Heart left ventricle (tissue), 16 donors: ENCODE measurements at regions of chr14 and their contacts with region 1.

Region 1: DNA sequence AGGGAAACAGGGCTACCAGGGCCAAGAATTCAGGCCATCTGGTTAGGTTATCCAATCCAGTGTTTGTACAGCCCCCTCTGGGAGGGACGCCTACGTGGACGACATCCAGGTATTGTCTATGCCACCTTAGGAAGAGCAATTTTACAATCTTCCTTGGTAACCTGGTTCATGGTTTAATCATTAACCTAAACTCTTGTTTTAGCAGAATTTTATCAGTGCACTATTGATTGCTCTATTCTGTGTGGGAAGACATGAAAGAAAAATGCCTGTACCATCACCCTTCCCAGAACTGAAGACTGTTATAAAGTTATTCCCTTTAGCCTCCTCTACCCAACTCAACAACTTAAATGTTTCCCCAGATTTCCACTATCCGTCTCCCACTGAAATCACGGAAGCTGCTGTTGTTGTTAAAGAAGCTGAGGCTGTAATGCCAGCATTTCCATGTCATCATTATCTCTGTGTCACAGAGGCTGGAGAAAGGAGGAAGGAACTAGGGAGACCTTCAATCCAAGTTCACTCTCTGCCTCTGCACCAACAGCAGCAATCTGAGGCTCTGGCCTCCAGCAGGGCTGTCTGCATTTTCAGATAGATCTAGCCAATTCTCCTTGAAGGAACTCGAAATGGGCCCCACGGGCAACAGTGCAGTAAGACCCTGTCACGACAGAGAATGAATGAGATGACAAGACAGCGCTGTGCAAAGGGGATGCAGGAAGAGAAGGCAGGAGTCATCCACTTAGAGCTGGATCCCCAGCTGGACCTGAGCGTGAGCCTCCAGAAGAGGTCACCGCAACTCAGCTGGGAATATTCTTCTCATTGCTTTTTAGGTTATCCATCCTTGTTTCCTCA is 183.4 kb upstream of the GZMB start:
- DNase-seq: peak in 4 of 5 donors; percentile 38 to 58 (median 42)
- ATAC-seq: peak; percentile 52 to 74 (median 63)
- H3K4me3 ChIP-seq: no peak overlapping the region
- H3K27ac ChIP-seq: peak overlapping the region; percentile 9 to 78 (median 66)
- H3K4me1 ChIP-seq: peaks cover 8 to 74% (median 35%) of the 10 kb centered on the region in 12 donors
- H3K27me3 ChIP-seq: no peaks in the 10 kb centered on the region
- CTCF ChIP-seq: peak in 9 of 12 donors; percentile 15 to 61 (median 38)
- POLR2A ChIP-seq: no peak

Region 2: DNA sequence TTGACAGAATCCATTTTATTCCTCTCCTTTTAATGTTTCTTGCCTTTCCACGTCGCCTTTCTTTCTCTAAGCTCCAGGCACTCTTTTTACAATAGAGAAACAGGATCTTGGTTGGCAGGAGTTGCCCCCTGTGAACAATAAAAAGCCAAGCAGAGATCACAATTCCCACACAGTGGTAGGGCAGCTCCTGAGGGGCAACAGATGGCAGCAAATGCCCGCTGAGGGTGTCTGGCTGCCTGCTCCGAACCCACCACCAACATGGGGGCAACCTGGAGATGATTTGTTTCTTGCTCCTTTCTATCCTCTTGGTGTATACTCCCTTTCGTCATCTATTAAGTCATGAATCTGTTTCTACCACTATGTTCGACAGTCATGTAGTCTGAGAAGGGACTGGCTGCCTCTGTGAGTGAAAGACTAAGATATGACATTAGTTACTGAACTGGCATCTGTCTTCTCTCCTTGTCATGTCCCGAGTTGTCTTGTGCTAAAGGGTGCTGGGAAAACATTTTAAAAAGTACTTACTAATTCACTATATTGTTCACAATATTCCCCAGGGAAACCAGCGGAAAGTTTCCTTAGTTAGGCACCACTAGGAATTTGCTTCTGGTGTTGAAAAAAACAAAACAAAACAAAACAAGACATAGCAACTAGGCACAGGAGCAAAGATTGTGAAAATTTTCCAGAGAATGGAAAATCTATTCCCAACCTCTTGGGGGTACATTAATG is 62.4 kb after region 1 on chr14:
- intact Hi-C with region 1: loop called in 1 of 10 experiments (anchors 5 kb)
- DNase-seq: peak in 1 of 5 donors; percentile 35
- ATAC-seq: peak; percentile 29 to 63 (median 56)
- H3K4me3 ChIP-seq: no peak overlapping the region
- H3K27ac ChIP-seq: peak overlapping the region; percentile 33 to 81 (median 71)
- H3K4me1 ChIP-seq: peaks cover 9 to 78% (median 44%) of the 10 kb centered on the region in 12 donors
- H3K27me3 ChIP-seq: no peaks in the 10 kb centered on the region
- CTCF ChIP-seq: no peak
- POLR2A ChIP-seq: no peak

Region 3: DNA sequence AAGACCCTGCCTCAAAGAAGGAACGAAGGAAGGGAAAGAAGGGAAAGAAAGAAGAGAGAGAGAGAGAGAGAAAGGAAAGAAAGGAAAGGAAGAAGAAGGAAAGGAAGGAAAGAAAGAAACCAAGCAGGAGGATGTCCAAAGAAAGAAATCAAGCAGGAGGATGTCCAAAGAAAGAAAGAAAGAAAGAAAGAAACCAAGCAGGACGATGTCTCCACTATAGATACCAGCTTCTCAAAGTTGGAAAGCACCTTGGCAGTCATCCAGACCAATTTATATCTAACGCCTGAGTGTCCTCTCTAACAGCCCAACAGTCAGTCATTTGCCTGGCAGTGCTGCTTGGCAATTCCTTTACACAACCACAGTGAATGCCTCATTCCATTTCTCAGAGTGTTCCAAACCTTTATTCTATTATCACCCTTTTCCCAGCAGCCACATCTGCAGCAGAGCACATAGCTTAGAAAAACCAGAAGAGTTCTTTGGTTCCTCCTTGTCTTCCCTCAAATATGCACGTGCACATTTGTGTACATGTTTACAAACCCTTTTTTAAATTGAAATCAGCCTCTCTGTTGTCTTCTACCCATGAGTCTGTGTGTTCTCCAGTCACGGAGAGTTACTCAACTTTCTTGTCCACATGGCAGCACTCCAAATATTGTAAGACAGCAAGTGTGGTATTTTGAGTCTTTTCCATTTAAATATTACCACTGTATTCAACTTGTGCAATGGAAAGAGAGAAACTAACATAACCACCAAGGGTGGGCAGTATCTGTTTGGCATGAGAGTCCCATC is 94.1 kb after region 1 on chr14:
- intact Hi-C with region 1: loop called in 1 of 10 experiments (anchors 10 kb)
- DNase-seq: no peak
- ATAC-seq: peak; percentile 15 to 64 (median 52)
- H3K4me3 ChIP-seq: peak overlapping the region in 2 of 12 donors; percentile 3 to 4
- H3K27ac ChIP-seq: peak overlapping the region in 3 of 12 donors; percentile 8 to 48 (median 15)
- H3K4me1 ChIP-seq: peaks cover 0 to 66% (median 18%) of the 10 kb centered on the region in 12 donors
- H3K27me3 ChIP-seq: no peaks in the 10 kb centered on the region
- CTCF ChIP-seq: no peak
- POLR2A ChIP-seq: no peak

Region 4: DNA sequence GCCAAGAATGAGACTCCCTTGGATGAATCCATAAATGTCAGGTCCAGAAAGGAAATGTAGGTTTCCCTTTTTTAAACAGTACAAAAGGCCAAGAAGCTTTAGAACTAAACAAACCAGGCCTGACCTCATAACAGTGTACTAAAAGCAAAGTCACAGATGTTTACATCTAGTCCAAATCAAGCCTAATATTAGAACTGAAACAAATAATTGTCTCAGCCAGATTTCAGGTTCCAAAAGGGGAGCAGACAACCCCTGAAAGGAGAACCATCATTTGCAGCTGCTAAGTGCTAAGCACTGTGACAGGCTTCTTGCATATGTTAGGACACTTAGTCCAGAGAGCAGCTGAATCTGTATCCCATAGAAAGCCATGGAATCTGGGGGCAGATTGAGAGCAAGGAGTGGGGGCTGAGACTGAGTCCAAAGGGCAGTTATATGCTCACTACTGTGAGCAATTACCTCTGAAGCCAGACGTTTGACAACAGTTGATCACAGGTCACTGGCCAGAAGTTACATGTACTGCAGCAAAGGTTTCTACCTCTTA is 142.4 kb after region 1 on chr14:
- intact Hi-C with region 1: loop called in 3 of 10 experiments (anchors 5 to 10 kb)
- DNase-seq: no peak
- ATAC-seq: peak; percentile 66 to 72 (median 66)
- H3K4me3 ChIP-seq: no peak overlapping the region
- H3K27ac ChIP-seq: peak overlapping the region in 11 of 12 donors; percentile 1 to 70 (median 51)
- H3K4me1 ChIP-seq: peaks cover 5 to 69% (median 35%) of the 10 kb centered on the region in 12 donors
- H3K27me3 ChIP-seq: no peaks in the 10 kb centered on the region
- CTCF ChIP-seq: no peak
- POLR2A ChIP-seq: no peak

Region 5: DNA sequence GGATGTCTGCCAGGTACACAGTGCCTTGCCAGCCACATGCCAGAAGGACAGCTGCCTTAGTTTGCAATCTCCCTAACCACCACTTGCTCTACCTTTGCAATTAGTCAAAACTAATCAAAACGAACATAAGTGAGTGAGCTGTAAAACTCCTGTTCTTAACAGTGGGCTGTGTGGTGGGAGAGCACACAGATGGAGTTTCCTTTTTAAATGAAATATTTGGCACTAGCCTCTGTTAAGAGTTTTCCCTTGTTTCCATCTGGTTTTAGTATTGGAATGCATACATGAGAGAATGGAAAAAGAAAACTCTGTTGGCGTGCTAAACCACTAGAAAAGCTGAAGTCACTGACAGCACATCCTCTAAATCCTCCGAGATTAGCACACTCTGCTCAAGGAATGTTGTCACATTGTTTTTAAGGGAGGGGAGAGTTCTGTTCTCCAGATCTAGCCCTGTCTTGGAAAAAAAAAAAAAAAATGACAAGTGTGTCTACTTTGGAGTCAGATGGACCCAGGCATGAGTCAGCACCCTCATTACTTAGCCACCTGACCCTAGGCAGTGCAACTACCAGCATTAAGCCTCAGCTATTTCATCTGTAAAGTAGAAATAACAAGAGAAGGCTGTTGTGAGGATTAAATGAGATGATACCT is 148.6 kb after region 1 on chr14:
- intact Hi-C with region 1: loop called in 2 of 10 experiments (anchors 5 to 10 kb)
- DNase-seq: peak in 3 of 5 donors; percentile 31 to 49 (median 48)
- ATAC-seq: peak; percentile 76 to 91 (median 86)
- H3K4me3 ChIP-seq: peak overlapping the region in 2 of 12 donors; percentile 4 to 10
- H3K27ac ChIP-seq: peak overlapping the region in 11 of 12 donors; percentile 26 to 84 (median 61)
- H3K4me1 ChIP-seq: peaks cover 0 to 64% (median 21%) of the 10 kb centered on the region in 12 donors
- H3K27me3 ChIP-seq: no peaks in the 10 kb centered on the region
- CTCF ChIP-seq: no peak
- POLR2A ChIP-seq: no peak

Region 6: DNA sequence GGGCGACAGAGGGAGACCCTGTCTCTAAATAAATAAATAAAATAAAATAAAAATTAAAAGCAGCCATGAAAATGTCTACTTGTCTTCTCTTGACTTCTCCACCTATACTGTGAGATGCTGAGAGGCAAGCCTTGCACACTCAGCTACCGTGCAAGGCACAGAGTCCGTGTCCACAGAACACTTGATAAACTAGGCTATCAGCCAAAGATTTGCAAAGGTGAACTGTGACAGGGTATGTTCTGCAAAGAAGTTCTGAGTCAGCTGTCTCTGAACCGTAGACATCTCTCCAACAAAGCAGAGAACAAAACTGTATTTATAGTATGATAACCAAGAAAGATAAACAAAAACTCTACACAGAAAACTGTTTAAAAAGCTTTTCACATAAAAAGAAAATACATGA is 197.0 kb after region 1 on chr14:
- intact Hi-C with region 1: no loop called
- DNase-seq: no peak
- ATAC-seq: peak; percentile 53 to 79 (median 68)
- H3K4me3 ChIP-seq: no peak overlapping the region
- H3K27ac ChIP-seq: no peak overlapping the region
- H3K4me1 ChIP-seq: peaks cover 4 to 58% (median 12%) of the 10 kb centered on the region in 12 donors
- H3K27me3 ChIP-seq: no peaks in the 10 kb centered on the region
- CTCF ChIP-seq: no peak
- POLR2A ChIP-seq: no peak

Region 7: DNA sequence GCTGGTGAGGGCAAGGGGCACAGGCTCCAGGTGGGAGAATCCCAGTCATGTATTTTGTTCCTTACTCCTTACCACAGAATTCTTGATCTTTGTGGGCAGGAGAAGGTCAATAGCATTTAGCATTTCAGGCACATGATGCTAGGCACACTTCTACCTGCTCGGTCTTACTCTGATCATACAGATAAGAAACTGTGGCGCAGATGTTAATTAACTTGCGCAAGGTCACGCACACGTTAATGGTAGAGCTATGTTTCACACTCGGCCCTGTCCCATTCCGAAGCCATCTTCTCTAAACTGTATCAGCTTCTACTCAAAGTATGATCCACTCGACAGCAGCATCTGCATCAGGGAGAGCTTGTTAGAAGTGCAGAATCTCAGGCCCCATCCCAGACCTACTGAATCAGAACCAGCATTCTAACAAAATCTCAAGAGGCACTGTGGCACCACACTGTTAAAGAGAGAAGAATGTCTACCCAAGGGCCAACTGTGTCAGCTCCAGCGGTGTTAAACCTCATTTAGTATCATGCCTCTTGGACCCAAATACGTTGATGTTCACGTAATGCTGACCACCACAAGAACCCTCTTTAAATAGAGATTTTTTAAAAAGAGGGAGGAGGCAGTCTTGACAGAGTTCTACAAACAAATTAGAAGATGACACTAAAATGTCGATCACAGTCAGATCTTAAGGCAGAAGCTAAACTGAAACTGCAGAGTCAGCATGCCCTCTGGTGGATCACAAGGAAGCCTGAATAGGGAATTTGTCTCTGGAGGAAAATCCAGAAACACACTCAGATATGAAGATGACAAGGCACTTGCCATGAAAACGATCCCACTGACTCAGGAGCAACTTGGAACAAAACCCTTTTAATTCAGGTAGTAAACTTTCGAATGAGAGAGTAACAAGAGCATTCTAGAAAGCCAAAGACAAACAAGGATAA is 225.2 kb after region 1 on chr14:
- intact Hi-C with region 1: loop called in 3 of 10 experiments (anchors 2 to 5 kb)
- DNase-seq: peak in 3 of 5 donors; percentile 28 to 35 (median 33)
- ATAC-seq: peak in 2 of 4 donors; percentile 32 to 39
- H3K4me3 ChIP-seq: no peak overlapping the region
- H3K27ac ChIP-seq: peak overlapping the region in 3 of 12 donors; percentile 1 to 27 (median 13)
- H3K4me1 ChIP-seq: peaks cover 0 to 76% (median 16%) of the 10 kb centered on the region in 12 donors
- H3K27me3 ChIP-seq: no peaks in the 10 kb centered on the region
- CTCF ChIP-seq: peak; percentile 15 to 67 (median 54)
- POLR2A ChIP-seq: no peak